Activated CD4-positive, alpha-beta memory T cell treated with anti-CD3 and anti-CD28 coated beads for 36 hours (primary cell): ENCODE measurements at regions of chr5 and their contacts with region 1.

Region 1: GRCh38 chr5:95808686-95809413 is 13.7 kb downstream of the GLRX start:
- DNase-seq: peak; percentile 86
- H3K4me3 Mint-ChIP-seq: peak overlapping the region; percentile 6
- H3K27ac Mint-ChIP-seq: peak overlapping the region; percentile 65
- H3K4me1 Mint-ChIP-seq: peaks cover 54% of the 10 kb centered on the region
- H3K27me3 Mint-ChIP-seq: no peaks in the 10 kb centered on the region

Region 2: DNA sequence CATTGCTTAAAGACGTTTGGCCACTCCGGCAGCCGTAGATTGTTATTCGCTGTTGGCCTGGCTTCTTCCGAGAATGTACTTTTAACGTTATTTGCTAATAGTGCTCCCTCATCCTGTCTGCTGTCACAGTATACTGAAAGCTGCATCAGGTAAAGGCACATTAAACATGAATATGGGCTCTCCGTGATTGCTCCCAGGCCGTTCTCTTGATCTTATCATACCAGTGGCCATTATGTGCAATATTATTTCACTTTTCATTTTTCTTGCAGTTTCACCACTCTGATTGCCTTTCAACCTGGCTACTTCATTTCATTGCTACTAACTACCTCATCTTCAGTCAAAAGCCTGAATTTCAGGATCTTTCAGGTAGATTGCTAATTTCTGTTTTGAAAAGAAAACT is 20.4 kb before region 1 on chr5:
- CTCF ChIA-PET with region 1: interaction called, 3 read pairs
- POLR2A ChIA-PET with region 1: no interaction called
- intact Hi-C with region 1: loop called (anchors 2 kb)
- DNase-seq: no peak
- H3K4me3 Mint-ChIP-seq: no peak overlapping the region
- H3K27ac Mint-ChIP-seq: no peak overlapping the region
- H3K4me1 Mint-ChIP-seq: no peaks in the 10 kb centered on the region
- H3K27me3 Mint-ChIP-seq: no peaks in the 10 kb centered on the region

Region 3: DNA sequence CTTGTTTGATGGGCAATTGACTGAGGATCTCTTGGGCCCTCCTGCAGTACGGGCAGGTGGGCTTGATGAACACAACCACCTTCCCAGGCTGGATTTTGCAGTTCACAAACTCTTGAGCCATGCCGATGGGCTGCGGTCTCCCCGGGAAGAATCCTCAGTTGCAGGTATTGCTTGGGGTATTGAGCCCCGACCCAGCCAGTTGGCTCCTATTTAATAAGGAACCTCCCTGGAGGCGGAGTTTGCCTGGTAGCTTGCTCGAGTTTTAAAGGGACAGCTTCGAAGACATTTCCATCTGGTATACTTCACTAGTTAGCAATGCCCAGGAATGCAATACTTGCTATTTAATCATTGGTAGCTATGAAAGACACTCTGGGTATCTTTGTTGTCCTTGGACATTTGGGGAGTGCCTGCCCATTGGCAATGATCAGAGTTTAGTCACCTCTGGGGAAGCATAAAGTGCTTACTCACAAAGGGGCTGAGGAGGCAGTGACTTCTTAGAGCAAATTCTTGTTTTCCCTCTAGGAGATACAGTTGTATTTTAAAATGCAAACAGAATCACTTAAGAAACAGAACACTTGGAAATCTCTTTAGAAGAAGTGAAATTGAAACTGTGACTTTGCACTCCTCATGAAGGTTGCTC is 13.8 kb after region 1 on chr5 and contains the start of gene GLRX:
- CTCF ChIA-PET with region 1: interaction called, 24 read pairs
- POLR2A ChIA-PET with region 1: interaction called, 45 read pairs
- intact Hi-C with region 1: loop called (anchors 1 kb)
- DNase-seq: peak; percentile 61
- H3K4me3 Mint-ChIP-seq: peak within 1 kb of the TSS; percentile 94
- H3K27ac Mint-ChIP-seq: peak within 1 kb of the TSS; percentile 90
- H3K4me1 Mint-ChIP-seq: peaks cover 65% of the 10 kb centered on the region
- H3K27me3 Mint-ChIP-seq: no peaks in the 10 kb centered on the region
- total RNA-seq, gene GLRX: 33.2 to 34.0 TPM

Region 4: DNA sequence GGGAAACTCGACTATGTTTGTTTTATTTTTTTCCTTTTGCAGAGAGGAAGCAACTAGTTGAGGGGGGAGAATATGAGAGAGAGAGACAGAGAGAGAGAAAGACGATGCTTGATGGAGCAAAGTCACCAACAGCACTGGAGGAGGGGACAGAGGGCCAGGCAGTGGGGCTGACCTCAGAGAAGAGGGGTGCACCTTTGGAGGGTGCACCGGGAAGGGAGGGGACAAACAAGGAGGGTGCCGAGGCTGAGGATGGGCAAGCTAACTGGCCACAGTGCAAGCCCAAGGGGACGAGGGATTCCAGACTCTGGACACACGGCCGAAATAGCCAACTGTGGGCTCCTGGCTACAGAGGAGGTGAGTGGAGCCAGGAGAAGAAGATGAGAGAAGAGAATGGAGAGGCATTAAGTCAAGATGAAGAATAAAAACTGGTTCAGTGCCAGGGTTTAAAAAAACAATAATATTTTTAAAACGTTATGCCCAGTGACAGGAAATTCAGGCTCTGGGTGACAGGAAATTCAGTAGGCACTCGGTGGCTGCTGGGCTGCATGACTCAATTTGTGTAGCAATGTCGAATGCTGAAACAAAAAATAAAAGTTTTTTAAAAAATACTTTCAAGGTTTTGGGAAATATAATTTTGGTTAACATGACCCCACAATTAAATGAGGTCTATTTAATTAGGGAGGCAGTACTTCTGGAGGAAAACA is 27.0 kb after region 1 on chr5:
- CTCF ChIA-PET with region 1: interaction called, 7 read pairs
- POLR2A ChIA-PET with region 1: interaction called, 4 read pairs
- intact Hi-C with region 1: loop called (anchors 1 kb)
- DNase-seq: no peak
- H3K4me3 Mint-ChIP-seq: peak overlapping the region; percentile 75
- H3K27ac Mint-ChIP-seq: peak overlapping the region; percentile 91
- H3K4me1 Mint-ChIP-seq: peaks cover 50% of the 10 kb centered on the region
- H3K27me3 Mint-ChIP-seq: no peaks in the 10 kb centered on the region

Region 5: GRCh38 chr5:96146675-96147074 is 337.8 kb after region 1 on chr5:
- CTCF ChIA-PET with region 1: no interaction called
- POLR2A ChIA-PET with region 1: no interaction called
- intact Hi-C with region 1: no loop called
- DNase-seq: peak; percentile 30
- H3K4me3 Mint-ChIP-seq: no peak overlapping the region
- H3K27ac Mint-ChIP-seq: no peak overlapping the region
- H3K4me1 Mint-ChIP-seq: peaks cover 4% of the 10 kb centered on the region
- H3K27me3 Mint-ChIP-seq: no peaks in the 10 kb centered on the region

Region 6: DNA sequence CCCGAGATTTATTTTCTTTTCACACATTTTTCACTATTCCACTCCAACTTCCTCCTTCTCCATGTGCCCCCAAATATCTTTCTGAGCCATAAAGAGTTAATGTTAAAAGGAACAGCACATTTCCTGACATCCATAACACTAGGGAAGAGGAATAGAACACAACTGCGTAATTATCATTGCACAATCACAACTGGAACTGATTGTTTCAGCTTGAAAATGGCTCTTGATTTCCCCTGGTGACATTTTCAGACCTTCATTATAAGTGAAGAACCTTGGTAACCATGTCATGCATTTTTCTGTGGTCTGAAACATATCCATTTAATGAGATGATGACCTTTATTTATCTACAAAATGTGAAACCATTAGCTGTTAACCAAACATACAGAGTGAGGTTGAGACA is 541.8 kb after region 1 on chr5:
- CTCF ChIA-PET with region 1: no interaction called
- POLR2A ChIA-PET with region 1: no interaction called
- intact Hi-C with region 1: no loop called
- DNase-seq: no peak
- H3K4me3 Mint-ChIP-seq: no peak overlapping the region
- H3K27ac Mint-ChIP-seq: no peak overlapping the region
- H3K4me1 Mint-ChIP-seq: peaks cover 5% of the 10 kb centered on the region
- H3K27me3 Mint-ChIP-seq: peaks cover 7% of the 10 kb centered on the region